ENCODE measurements at regions of chr1 and their contacts with region 1.

Region 1: GRCh38 chr1:89566761-89567174 is 42.1 kb downstream of the LRRC8B start:
- DNase-seq: no peak
- ATAC-seq: peak; percentile 46
- H3K4me3 ChIP-seq: no peak overlapping the region
- H3K4me3 Mint-ChIP-seq: no peak overlapping the region
- H3K27ac ChIP-seq: no peak overlapping the region
- H3K27ac Mint-ChIP-seq: peak overlapping the region in 3 of 9 donors; percentile 11 to 54 (median 53)
- H3K4me1 ChIP-seq: peaks cover 0 to 4% of the 10 kb centered on the region in 2 donors
- H3K4me1 Mint-ChIP-seq: peaks cover 22 to 70% (median 59%) of the 10 kb centered on the region in 7 donors
- H3K27me3 ChIP-seq: no peaks in the 10 kb centered on the region
- H3K27me3 Mint-ChIP-seq: no peaks in the 10 kb centered on the region

Region 2: GRCh38 chr1:89524369-89525168 is 42.2 kb before region 1 on chr1 and contains the start of gene LRRC8B:
- CTCF ChIA-PET with region 1: no interaction called
- POLR2A ChIA-PET with region 1: no interaction called
- intact Hi-C with region 1: no loop called
- DNase-seq: peak; percentile 80 to 91 (median 86)
- ATAC-seq: peak; percentile 94
- H3K4me3 ChIP-seq: peak within 1 kb of the TSS; percentile 93
- H3K4me3 Mint-ChIP-seq: peak within 1 kb of the TSS in 1 of 10 donors; percentile 76
- H3K27ac ChIP-seq: peak within 1 kb of the TSS; percentile 92
- H3K27ac Mint-ChIP-seq: peak within 1 kb of the TSS in 8 of 9 donors; percentile 89 to 97 (median 94)
- H3K4me1 ChIP-seq: peaks cover 7 to 34% of the 10 kb centered on the region in 2 donors
- H3K4me1 Mint-ChIP-seq: peaks cover 11 to 31% (median 21%) of the 10 kb centered on the region in 7 donors
- H3K27me3 ChIP-seq: no peaks in the 10 kb centered on the region
- H3K27me3 Mint-ChIP-seq: no peaks in the 10 kb centered on the region
- total RNA-seq, gene LRRC8B: 8.8 to 23.0 (median 17.1) TPM

Region 3: DNA sequence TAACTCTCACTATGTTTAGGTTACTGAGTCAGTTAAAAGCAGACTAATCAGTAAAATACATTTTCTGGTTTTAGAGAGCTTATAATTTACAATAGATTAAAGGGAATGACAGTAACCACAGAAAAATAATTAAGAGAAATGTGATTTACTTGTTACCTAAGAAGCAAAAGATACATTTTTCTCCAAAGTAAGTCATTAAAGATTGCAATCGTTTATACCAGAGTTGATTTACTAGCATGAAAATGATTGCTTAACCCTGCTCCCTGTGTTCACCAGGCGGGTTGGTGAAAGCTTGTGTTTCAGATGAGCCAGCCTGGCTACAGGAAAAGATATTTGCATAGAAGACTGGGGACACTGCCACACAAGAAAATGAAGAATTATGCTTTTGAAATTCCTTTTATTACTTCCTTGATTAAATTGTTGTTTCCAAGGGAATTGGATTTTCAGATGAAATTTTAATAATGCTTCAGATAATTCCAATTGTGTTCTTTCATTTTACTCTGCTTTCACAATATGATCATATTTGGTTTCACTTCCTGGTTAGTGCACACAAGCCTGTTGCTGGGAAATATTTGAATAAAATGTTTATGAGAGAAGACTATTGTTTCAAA is 14.2 kb before region 1 on chr1:
- CTCF ChIA-PET with region 1: interaction called, 9 read pairs
- POLR2A ChIA-PET with region 1: no interaction called
- intact Hi-C with region 1: loop called in 1 of 2 experiments (anchors 1 kb)
- DNase-seq: peak in 3 of 9 donors; percentile 4 to 13 (median 12)
- ATAC-seq: peak; percentile 54
- H3K4me3 ChIP-seq: peak overlapping the region; percentile 40
- H3K4me3 Mint-ChIP-seq: peak overlapping the region in 9 of 10 donors; percentile 18 to 78 (median 56)
- H3K27ac ChIP-seq: no peak overlapping the region
- H3K27ac Mint-ChIP-seq: peak overlapping the region; percentile 7 to 77 (median 62)
- H3K4me1 ChIP-seq: peaks cover 0 to 12% of the 10 kb centered on the region in 2 donors
- H3K4me1 Mint-ChIP-seq: peaks cover 44 to 95% (median 76%) of the 10 kb centered on the region in 7 donors
- H3K27me3 ChIP-seq: no peaks in the 10 kb centered on the region
- H3K27me3 Mint-ChIP-seq: no peaks in the 10 kb centered on the region